ENCODE measurements at regions of chr17 and their contacts with region 1.

Region 1: DNA sequence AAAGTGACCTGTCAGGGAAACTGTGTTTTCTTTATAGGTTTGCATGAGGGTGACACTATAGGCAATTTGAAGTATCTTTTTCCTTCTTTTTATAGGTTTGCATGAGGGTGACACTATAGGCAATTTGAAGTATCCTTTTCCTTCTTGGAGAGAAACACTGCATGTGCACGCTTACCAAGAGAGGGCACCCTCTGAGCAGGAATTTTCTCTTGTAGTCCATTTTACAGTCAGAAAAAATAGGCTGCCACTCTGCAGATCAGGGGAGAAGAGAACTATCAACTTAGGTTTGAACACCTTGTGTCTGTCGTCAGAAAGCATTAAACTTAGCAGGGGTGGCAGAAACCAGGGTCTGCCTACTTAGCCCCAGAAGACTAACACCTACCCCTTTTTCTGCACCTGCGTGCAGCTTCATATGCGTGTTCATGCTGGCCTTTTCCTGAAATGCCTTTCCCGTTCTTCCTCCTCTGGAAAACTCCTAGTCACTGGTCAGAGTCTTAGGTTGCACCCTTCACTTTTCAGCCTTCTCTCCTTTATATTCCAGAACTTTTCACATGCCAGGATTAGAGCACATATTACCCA is 16.4 kb upstream of the SMIM36 start:
- DNase-seq: peak; percentile 74
- H3K4me3 ChIP-seq: no peak overlapping the region; a peak in 1 of 4 replicates
- H3K27ac ChIP-seq: no peak overlapping the region
- H3K4me1 ChIP-seq: peaks cover 0 to 2% of the 10 kb centered on the region in 2 experiments; a peak in 1 of 4 replicates
- H3K27me3 ChIP-seq: no peaks in the 10 kb centered on the region
- CTCF ChIP-seq: peak; percentile 87
- EP300 ChIP-seq: no peak
- RAD21 ChIP-seq: peak; percentile 99

Region 2: DNA sequence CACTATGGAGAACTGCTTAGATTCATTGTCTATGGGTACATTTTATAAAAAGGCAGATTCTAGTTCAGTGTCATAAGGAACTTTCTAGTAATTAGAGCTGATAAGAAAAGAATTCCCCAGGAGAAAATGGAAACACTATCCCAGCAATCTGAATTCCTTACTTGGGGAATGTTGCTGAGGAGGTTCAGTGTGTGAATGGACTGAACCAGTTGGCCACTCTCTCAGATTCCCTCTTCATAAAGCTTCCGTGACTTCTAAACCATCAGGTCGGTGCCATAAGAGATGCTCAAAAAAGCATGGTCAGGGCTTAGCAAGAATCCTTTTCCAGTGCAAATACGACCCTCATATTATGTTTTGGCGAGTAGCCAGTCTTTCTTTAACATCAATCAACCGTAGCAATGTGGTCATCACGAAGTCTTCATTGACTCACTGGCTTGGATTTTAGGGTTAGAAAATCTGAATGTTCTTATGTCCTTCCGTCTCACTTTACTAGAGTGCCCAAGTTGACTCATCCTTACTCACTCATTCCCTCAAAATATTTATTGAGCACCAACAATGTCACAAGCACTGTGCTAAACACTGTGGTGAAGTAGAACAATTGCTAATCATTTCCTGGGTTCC is 365.6 kb before region 1 on chr17:
- CTCF ChIA-PET with region 1: no interaction called
- POLR2A ChIA-PET with region 1: no interaction called
- DNase-seq: no peak
- H3K4me3 ChIP-seq: no peak overlapping the region
- H3K27ac ChIP-seq: peak overlapping the region in 1 of 2 experiments; percentile 51; a peak in 2 of 4 replicates
- H3K4me1 ChIP-seq: peaks cover 4 to 52% of the 10 kb centered on the region in 2 experiments; a peak in 2 of 4 replicates
- H3K27me3 ChIP-seq: no peaks in the 10 kb centered on the region
- CTCF ChIP-seq: no peak
- EP300 ChIP-seq: peak; percentile 17 to 65; a peak in 3 of 4 replicates
- RAD21 ChIP-seq: no peak

Region 3: DNA sequence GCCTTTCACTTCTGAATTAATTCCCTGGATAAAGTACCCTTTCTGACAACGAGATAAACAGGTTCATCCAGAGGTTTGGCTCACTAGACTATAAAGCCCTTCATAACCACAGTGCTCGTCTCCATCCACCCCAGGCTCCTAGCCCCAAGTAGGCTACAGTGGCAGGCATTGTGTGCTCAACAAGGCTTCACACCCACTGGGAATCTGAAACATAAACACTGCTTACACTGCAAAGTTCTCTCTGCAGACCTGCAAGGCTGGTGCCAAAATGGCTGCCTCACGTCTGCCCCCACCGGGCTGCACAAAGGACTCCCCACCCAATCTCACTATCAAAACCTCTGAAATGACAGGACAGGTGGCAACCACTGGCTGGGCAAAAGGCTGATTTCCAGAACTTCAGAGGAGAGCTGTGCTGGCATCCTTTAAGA is 267.9 kb before region 1 on chr17:
- CTCF ChIA-PET with region 1: no interaction called
- POLR2A ChIA-PET with region 1: no interaction called
- DNase-seq: no peak
- H3K4me3 ChIP-seq: no peak overlapping the region
- H3K27ac ChIP-seq: no peak overlapping the region
- H3K4me1 ChIP-seq: peaks cover 0 to 4% of the 10 kb centered on the region in 2 experiments; a peak in 1 of 4 replicates
- H3K27me3 ChIP-seq: peaks cover 8% of the 10 kb centered on the region
- CTCF ChIP-seq: no peak
- EP300 ChIP-seq: no peak
- RAD21 ChIP-seq: no peak

Region 4: DNA sequence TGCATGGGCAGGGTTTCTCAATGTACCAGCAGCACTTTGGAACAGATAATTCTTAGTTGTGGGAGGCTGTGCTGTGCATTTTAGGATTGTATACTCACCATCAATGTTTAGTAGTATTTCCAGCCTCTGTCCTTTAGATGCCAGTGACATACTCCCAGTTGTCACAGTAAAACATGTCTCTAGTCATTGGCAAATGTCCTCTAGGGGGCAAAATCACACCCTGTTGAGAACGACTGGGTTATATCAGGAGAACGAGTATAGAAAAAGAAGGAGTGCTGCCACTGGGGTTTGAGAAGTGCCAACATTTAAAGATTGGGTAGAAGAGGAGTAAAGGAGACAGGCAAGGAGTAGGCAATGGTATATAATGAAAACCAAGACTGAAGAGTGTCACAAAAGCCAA is 21.5 kb after region 1 on chr17:
- CTCF ChIA-PET with region 1: interaction called, 20 read pairs
- POLR2A ChIA-PET with region 1: no interaction called
- DNase-seq: no peak
- H3K4me3 ChIP-seq: no peak overlapping the region
- H3K27ac ChIP-seq: no peak overlapping the region
- H3K4me1 ChIP-seq: no peaks in the 10 kb centered on the region
- H3K27me3 ChIP-seq: no peaks in the 10 kb centered on the region; the same call in 1 of the 2 replicates
- CTCF ChIP-seq: peak; percentile 41
- EP300 ChIP-seq: no peak
- RAD21 ChIP-seq: peak; percentile 69

Region 5: DNA sequence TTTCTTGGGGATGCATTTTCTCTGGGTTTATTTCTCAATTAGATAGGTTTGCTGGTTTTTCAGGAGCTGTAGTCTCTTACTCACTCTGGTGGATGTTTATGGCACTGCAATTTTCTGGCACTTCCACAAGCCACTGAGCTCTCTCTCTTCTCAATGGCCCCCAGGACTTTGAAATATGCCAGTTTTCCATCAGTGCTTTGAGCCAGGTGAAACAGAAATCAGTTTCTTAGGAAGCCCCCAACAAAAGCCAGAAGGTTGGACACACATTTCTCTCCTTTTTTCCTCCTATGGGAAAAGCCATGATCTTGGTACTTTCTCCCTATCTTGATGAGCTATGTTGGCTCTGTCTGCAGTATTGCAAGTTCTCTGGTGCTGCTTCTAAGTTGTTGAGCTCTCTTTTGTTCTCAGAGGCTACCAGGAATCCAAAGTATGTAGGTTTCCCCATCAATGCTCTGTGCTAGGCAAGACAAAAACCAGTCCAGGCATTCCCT is 74.3 kb after region 1 on chr17:
- CTCF ChIA-PET with region 1: interaction called, 85 read pairs
- POLR2A ChIA-PET with region 1: no interaction called
- DNase-seq: peak; percentile 52
- H3K4me3 ChIP-seq: no peak overlapping the region
- H3K27ac ChIP-seq: no peak overlapping the region
- H3K4me1 ChIP-seq: no peaks in the 10 kb centered on the region
- H3K27me3 ChIP-seq: no peaks in the 10 kb centered on the region
- CTCF ChIP-seq: peak; percentile 83
- EP300 ChIP-seq: no peak
- RAD21 ChIP-seq: peak; percentile 92

Region 6: DNA sequence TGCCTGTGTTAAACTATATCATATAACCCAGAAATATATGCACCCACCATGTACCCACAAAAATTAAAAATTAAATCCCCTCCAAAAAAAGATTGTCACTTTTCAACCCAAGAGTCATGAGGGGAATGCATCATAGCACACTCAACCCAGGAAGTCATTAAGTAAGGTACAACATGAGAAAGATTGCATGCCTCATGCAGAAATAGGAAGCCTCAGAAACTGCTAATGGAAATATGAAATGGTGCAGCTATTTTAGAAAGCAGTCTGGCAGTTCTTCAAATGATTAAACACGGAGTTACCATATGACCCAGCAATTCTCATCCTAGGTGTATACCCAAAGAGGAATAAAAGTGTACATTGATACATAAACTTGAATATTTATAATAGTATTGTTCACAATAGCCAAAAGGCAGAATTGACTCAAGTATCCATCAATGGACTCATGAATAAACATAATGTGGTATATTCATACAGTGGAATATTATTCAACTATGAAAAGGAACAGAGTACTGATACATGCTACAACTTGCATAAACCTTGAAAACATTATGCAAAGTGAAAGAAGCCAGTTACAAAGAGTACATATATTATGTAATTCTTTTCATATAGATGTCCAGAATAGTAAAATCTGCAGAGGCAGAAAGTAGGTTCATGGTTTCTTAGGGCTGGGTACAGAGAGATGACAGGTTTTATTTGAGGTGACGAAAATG is 124.6 kb after region 1 on chr17:
- CTCF ChIA-PET with region 1: interaction called, 24 read pairs
- POLR2A ChIA-PET with region 1: no interaction called
- DNase-seq: no peak
- H3K4me3 ChIP-seq: no peak overlapping the region
- H3K27ac ChIP-seq: no peak overlapping the region
- H3K4me1 ChIP-seq: peaks cover 5 to 17% of the 10 kb centered on the region in 2 experiments; a peak in 3 of 4 replicates
- H3K27me3 ChIP-seq: no peaks in the 10 kb centered on the region
- CTCF ChIP-seq: no peak
- EP300 ChIP-seq: no peak
- RAD21 ChIP-seq: no peak

Region 7: GRCh38 chr17:55717898-55718735 is 190.5 kb after region 1 on chr17:
- CTCF ChIA-PET with region 1: interaction called, 246 read pairs
- POLR2A ChIA-PET with region 1: no interaction called
- DNase-seq: peak; percentile 54
- H3K4me3 ChIP-seq: no peak overlapping the region; a peak in 1 of 4 replicates
- H3K27ac ChIP-seq: peak overlapping the region in 1 of 2 experiments; percentile 13; a peak in 1 of 4 replicates
- H3K4me1 ChIP-seq: peaks cover 2 to 8% of the 10 kb centered on the region in 2 experiments; a peak in 2 of 4 replicates
- H3K27me3 ChIP-seq: no peaks in the 10 kb centered on the region
- CTCF ChIP-seq: peak; percentile 99
- EP300 ChIP-seq: no peak
- RAD21 ChIP-seq: peak; percentile 97

Region 8: DNA sequence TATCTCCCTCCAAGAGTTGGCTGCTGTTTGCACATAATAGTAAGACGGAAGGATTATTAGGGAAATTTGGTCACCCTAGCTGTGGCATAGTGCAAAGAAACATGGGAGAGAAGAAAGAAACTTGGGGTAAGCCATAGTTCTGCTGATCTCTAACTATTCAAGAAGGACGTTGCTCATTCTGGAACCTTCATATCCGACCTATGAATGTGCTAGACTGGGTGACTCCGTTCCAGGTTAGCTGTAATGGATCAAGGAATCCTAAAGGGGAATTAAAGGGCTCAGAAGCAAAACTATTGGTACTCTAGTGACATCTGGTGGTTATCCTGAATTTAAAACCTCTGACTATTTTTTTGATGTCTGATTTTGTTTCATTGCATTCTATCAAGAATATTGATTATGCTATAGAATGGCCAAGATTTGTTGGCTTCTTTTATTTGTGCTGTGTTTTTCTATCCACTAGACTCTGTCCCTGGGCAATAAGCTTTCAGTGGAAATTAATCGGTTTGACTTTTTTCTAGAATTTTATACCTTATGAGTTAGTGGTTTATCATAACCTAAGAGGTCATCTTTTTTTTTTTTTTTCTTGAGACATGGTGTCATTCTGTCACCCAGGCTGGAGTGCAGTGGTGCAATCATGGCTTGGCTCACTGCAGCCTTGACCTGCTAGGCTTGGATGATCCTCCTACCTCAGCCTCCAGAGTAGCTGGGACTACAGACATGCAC is 242.7 kb after region 1 on chr17:
- CTCF ChIA-PET with region 1: interaction called, 499 read pairs
- POLR2A ChIA-PET with region 1: interaction called, 3 read pairs
- DNase-seq: peak; percentile 73
- H3K4me3 ChIP-seq: no peak overlapping the region; a peak in 1 of 4 replicates
- H3K27ac ChIP-seq: no peak overlapping the region
- H3K4me1 ChIP-seq: peaks cover 8 to 9% of the 10 kb centered on the region in 2 experiments
- H3K27me3 ChIP-seq: no peaks in the 10 kb centered on the region
- CTCF ChIP-seq: peak; percentile 85
- EP300 ChIP-seq: no peak
- RAD21 ChIP-seq: peak; percentile 94

Region 9: DNA sequence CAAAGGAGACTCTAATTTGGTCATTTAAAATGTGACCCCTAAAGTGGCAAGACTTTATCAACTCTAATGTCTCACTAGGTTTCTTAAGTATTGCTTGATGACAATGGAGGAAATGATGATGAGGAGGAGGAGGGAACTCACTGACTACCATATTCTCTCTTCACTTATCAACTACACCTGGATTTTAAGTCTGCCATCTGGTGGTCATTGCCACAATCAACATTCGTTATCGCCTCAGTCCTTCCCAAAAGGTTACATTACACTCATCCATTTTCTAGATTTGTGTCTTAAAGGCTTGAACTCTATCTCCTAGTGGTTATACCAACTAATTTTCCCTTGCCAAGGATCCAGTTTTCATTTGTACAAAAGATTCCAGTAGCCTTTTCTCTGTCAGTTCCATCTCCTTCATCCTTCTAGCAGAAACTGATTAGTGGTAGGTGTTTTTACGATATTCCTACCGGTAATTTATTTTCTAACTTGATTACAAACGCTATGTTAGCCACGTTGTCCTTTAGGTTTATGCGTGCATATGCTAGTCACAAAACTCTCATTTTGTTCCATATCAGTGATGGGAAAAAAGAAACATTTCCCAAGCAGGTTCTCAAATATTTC is 951.3 kb after region 1 on chr17:
- CTCF ChIA-PET with region 1: interaction called, 13 read pairs
- POLR2A ChIA-PET with region 1: no interaction called
- DNase-seq: peak; percentile 21
- H3K4me3 ChIP-seq: no peak overlapping the region
- H3K27ac ChIP-seq: no peak overlapping the region
- H3K4me1 ChIP-seq: no peaks in the 10 kb centered on the region
- H3K27me3 ChIP-seq: no peaks in the 10 kb centered on the region; the same call in 1 of the 2 replicates
- CTCF ChIP-seq: peak; percentile 73
- EP300 ChIP-seq: no peak
- RAD21 ChIP-seq: peak; percentile 60

Measured in SK-N-SH (cell line).